ENCODE measurements at regions of chr9 and their contacts with region 1.

Region 1: GRCh38 chr9:95127249-95128176 is 190.0 kb downstream of the FANCC start:
- DNase-seq: no peak
- H3K4me3 ChIP-seq: peak overlapping the region; percentile 41
- CTCF ChIP-seq: peak; percentile 100

Region 2: GRCh38 chr9:94656200-94656599 is 471.3 kb before region 1 on chr9:
- CTCF ChIA-PET with region 1: interaction called, 18 read pairs
- POLR2A ChIA-PET with region 1: no interaction called
- DNase-seq: no peak
- H3K4me3 ChIP-seq: no peak overlapping the region
- CTCF ChIP-seq: no peak

Region 3: DNA sequence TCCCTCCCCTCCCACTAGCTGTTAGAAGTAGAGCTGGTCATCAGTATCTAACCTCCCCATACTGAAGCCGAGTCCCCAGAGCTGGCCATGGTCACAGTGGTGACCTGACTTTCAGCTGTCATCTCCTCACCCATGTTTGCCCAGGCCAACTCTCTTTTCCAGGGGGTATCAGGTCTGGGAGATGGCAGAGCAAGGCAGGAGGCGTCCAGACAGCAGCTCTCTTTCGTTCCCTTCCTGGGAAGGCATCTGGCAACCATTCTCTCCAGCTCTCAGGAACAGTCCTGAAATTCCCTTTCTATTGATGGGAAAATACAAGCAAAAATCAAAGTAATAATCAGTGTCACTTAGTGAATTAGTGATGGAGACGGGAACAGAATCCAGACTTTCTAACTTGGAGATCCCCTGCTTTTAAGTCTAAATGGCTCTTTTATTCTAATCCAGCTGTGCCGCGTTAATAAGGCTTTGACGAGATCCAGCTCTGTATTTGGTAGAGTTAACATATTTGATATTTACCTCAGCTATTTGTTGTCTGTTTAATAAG is 422.3 kb before region 1 on chr9:
- CTCF ChIA-PET with region 1: interaction called, 10 read pairs
- POLR2A ChIA-PET with region 1: no interaction called
- DNase-seq: no peak
- H3K4me3 ChIP-seq: no peak overlapping the region
- CTCF ChIP-seq: no peak

Region 4: GRCh38 chr9:95008151-95008771 is 119.3 kb before region 1 on chr9:
- CTCF ChIA-PET with region 1: interaction called, 12 read pairs
- POLR2A ChIA-PET with region 1: no interaction called
- DNase-seq: no peak
- H3K4me3 ChIP-seq: peak overlapping the region; percentile 77
- CTCF ChIP-seq: no peak

Region 5: DNA sequence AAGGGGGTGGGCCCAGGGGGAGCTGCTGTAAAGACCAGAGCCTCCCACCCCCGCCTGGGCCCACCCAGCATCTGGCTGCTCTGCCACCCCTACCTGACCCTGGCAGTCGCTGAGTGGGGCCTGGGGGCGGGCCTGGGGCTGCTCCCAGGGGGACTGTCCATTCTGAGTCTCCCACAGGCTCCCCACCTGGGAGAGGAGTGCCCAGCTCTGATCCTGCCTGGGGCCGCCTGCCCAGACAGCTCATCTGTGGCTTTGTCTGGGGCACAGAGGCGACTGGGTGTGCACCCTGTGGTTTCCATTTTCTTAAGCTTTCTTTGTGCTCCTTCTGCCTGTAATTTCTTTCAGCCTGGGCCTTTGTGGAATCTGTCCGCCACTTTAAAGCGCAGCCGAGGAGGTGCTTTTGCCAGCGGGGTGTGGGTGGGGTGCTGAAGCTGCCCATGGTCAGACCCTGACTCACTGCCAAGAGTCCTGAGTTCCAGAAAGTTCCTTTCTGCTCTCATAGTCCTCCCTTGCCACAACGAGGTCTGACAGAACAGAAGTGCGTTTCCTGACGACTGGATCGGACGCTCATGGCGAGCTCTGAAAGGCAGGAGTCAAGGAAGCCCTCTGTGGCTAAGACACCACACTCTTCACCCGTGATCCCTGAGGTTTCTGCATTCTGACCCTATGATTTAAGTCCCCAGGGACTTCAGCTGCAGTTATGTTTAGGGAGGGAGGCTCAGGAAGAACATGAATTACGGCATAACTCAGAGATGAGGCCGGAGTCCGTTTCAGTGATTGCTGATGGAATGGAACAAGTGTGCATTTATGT is 35.0 kb before region 1 on chr9:
- CTCF ChIA-PET with region 1: interaction called, 25 read pairs
- POLR2A ChIA-PET with region 1: no interaction called
- DNase-seq: peak; percentile 78
- H3K4me3 ChIP-seq: peak overlapping the region; percentile 6; the same call in 1 of the 2 replicates
- CTCF ChIP-seq: no peak

Region 6: DNA sequence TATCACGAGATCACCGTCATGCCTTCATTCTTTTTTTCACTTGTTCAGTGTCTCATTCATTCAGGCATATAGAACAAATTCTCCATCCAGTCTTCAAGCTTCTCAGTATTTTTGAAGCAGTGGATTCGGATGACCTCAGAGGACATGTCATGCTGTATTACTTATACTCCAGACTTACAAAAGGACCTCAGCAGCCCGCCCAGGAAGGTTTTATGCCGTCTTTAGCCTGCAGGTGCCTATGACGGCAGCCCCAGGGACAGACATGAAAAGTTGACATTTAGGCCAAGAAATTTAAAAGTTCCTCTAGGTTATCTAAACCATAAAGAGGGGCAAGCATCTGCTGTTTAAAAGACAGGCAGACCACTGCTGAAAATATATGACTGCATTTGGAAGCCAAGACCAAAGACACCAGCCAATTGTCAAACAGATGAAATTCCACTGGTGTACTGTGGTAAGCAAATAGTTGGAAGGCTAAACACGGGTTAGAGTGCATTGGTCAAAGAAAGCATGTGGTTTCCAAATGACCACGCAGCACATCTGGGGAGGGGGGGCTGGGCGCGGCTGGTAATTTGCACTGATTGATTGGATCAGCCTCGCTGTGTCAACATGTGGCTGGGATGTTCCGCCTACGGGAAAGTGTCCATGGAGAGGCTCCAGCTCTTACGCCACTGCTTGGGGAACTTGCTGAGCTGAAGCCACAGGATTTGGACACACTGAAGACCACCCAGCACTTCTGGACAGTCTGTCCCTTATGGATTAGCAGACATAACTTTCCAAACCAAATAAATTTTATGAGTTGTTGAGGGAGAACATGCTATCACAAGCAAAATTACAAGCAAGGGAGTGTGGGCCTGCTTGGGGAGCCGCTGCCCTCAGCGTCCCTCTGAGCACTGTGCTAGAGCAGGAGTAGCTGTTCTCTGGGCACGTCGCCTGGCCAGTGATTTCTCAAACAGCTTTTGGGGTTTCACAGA is 16.4 kb after region 1 on chr9:
- CTCF ChIA-PET with region 1: interaction called, 134 read pairs
- POLR2A ChIA-PET with region 1: no interaction called
- DNase-seq: no peak
- H3K4me3 ChIP-seq: no peak overlapping the region
- CTCF ChIP-seq: no peak

Region 7: GRCh38 chr9:95167998-95168397 is 40.5 kb after region 1 on chr9:
- CTCF ChIA-PET with region 1: interaction called, 18 read pairs
- POLR2A ChIA-PET with region 1: interaction called, 3 read pairs
- DNase-seq: peak; percentile 78
- H3K4me3 ChIP-seq: no peak overlapping the region
- CTCF ChIP-seq: peak; percentile 77